Panc1 (cell line): ENCODE measurements at regions of chr20 and their contacts with region 1.

Region 1: GRCh38 chr20:4546786-4547185 is 174.9 kb upstream of the PRND start:
- DNase-seq: peak; percentile 20
- ATAC-seq: peak; percentile 95
- H3K4me3 ChIP-seq: no peak overlapping the region
- H3K27ac ChIP-seq: no peak overlapping the region
- H3K4me1 ChIP-seq: no peaks in the 10 kb centered on the region
- H3K27me3 ChIP-seq: no peaks in the 10 kb centered on the region
- CTCF ChIP-seq: no peak

Region 2: GRCh38 chr20:4684837-4685413 is 138.1 kb after region 1 on chr20:
- CTCF ChIA-PET with region 1: interaction called, 10 read pairs
- POLR2A ChIA-PET with region 1: no interaction called
- in situ Hi-C with region 1: no loop called
- intact Hi-C with region 1: no loop called
- DNase-seq: no peak
- ATAC-seq: peak; percentile 3; the same call in 1 of the 2 replicates
- H3K4me3 ChIP-seq: no peak overlapping the region
- H3K27ac ChIP-seq: peak overlapping the region; percentile 94
- H3K4me1 ChIP-seq: peaks cover 30% of the 10 kb centered on the region
- H3K27me3 ChIP-seq: no peaks in the 10 kb centered on the region
- CTCF ChIP-seq: no peak